Activated CD4-positive, alpha-beta memory T cell treated with anti-CD3 and anti-CD28 coated beads for 36 hours (primary cell): ENCODE measurements at regions of chr14 and their contacts with region 1.

Region 1: GRCh38 chr14:49485290-49485689 is 100.9 kb downstream of the RPS29 start:
- DNase-seq: no peak
- H3K4me3 Mint-ChIP-seq: no peak overlapping the region
- H3K27ac Mint-ChIP-seq: no peak overlapping the region
- H3K4me1 Mint-ChIP-seq: peaks cover 4% of the 10 kb centered on the region
- H3K27me3 Mint-ChIP-seq: peaks cover 7% of the 10 kb centered on the region

Region 2: DNA sequence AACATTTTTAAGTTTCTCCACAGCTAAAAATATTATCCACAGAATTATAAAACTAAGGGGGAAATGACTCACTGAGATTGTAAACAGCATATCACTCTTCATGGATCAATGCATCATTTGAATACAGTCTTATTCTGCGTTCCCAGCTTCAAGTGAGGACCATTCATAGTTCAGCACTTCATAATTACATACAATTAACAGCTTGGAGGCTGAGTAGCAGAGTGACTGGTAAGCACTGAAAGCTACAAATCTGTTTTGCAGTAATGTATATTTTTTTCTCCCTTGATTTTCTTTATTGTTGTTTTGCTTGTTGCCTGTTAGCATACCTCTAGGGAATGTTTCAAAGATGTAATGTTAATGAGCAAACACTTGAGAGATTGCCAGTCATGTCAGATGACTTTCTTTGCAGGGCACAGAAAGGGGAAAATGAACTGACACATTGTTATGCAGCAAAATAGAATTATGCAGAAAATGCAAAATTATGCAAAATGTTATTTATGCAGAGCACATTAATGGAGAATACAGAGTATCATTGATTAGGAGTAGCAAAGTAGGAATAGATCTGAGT is 37.7 kb before region 1 on chr14:
- CTCF ChIA-PET with region 1: no interaction called
- POLR2A ChIA-PET with region 1: no interaction called
- intact Hi-C with region 1: no loop called
- DNase-seq: no peak
- H3K4me3 Mint-ChIP-seq: no peak overlapping the region
- H3K27ac Mint-ChIP-seq: no peak overlapping the region
- H3K4me1 Mint-ChIP-seq: no peaks in the 10 kb centered on the region
- H3K27me3 Mint-ChIP-seq: peaks cover 3% of the 10 kb centered on the region

Region 3: DNA sequence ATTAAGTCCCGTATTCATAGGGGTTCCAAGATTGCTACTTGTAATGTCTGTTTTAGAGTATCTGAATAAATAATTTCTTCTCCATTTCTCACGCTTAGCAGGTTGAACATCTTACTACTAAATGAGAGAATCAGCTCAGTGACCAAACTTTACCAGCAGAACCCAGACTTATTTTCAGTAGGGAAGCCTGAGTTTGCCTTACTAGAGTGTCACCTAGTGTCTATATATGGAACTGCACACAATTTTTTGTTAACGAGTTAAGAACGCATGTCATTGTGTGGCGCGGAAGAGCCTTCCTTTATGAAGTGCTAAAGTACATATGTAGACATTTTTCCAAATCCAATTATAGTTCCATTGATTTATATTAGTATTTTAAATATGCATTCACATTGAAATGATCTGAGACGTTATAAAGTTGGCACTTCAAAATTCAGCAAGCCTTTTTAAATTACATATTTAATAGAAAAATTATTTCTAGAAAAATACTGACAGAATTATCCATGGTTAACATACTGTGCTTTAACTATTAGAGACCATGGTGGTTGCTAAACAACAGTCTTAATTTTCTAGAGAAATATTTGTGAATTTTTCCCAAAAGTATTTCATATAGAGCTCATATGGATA is 12.5 kb after region 1 on chr14:
- CTCF ChIA-PET with region 1: interaction called, 15 read pairs
- POLR2A ChIA-PET with region 1: interaction called, 3 read pairs
- intact Hi-C with region 1: no loop called
- DNase-seq: no peak
- H3K4me3 Mint-ChIP-seq: no peak overlapping the region
- H3K27ac Mint-ChIP-seq: no peak overlapping the region
- H3K4me1 Mint-ChIP-seq: no peaks in the 10 kb centered on the region
- H3K27me3 Mint-ChIP-seq: peaks cover 14% of the 10 kb centered on the region

Region 4: DNA sequence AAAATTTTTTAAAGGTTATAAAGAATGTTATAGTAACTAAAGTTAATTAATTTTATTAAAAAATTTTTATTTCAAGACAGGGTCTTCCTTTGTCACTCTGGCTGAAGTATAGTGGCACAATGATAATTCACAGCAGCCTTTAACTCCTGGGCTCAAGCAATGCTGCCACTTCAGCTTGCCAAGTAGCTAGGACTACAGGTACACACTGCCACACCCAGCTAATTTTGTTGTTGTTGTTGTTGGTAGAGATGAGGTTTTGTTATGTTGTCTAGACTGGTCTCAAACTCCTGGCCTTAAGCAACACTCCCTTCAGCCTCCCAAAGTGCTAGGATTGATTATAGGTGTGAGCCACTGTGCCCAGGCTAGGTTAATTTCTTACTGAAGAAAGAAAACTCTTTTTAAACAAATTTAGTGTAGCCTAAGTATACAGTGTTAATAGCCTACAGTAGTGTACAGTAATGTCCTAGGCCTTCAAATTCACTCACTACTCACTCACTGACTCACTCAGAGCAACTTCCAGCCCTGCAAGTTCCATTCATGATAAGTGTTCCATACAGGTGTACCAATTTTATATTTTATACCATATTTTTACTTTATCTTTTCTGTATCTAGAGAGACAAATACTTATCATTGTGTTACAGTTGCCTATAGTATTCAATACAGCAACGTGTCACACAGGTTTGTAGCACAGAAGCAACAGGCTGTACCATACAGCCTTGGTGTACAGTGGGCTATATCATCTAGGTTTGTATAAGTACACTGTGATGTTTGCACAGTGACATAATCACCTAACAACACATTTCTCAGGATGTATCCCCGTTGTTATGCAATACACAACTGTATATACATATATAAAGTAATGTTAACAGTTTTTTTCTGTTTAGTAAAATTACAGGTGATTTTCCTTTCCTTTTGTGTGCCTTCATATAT is 174.5 kb after region 1 on chr14:
- CTCF ChIA-PET with region 1: no interaction called
- POLR2A ChIA-PET with region 1: no interaction called
- intact Hi-C with region 1: no loop called
- DNase-seq: no peak
- H3K4me3 Mint-ChIP-seq: no peak overlapping the region
- H3K27ac Mint-ChIP-seq: no peak overlapping the region
- H3K4me1 Mint-ChIP-seq: no peaks in the 10 kb centered on the region
- H3K27me3 Mint-ChIP-seq: no peaks in the 10 kb centered on the region